Esophagus muscularis mucosa (tissue), 4 donors: ENCODE measurements at regions of chr4 and their contacts with region 1.

Region 1: GRCh38 chr4:123396307-123397143 is at the start of gene SPRY1:
- DNase-seq: peak; percentile 96
- H3K4me3 ChIP-seq: peak within 1 kb of the TSS; percentile 88 to 94 (median 92)
- H3K27ac ChIP-seq: peak within 1 kb of the TSS; percentile 92 to 95 (median 94)
- H3K4me1 ChIP-seq: peaks cover 0 to 24% (median 11%) of the 10 kb centered on the region in 4 donors
- H3K27me3 ChIP-seq: no peaks in the 10 kb centered on the region
- CTCF ChIP-seq: no peak
- EP300 ChIP-seq: no peak
- POLR2A ChIP-seq: peak; percentile 61
- total RNA-seq, gene SPRY1: 103 to 136 (median 136) TPM

Region 2: DNA sequence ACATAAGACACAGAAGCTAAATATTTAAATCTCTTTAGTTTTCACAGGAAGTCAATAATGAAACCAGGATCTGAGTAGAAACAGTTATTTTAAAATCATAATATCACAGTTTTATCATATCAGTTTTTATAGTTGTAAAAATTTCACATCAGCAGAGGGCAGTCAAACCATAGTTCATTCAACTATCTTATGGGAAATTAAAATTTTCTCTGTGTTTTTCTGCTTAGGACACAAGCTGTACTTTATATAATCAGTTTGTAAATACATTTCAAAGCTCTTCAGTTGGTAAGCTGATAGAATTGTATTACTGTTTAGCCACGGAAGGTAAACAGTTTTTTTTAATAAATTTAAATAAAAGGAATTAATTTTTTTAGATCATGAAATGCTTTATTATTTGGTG is 269.3 kb before region 1 on chr4:
- intact Hi-C with region 1: loop called (anchors 5 kb)
- DNase-seq: no peak
- H3K4me3 ChIP-seq: no peak overlapping the region
- H3K27ac ChIP-seq: no peak overlapping the region
- H3K4me1 ChIP-seq: peaks cover 0 to 16% (median 2%) of the 10 kb centered on the region in 4 donors
- H3K27me3 ChIP-seq: no peaks in the 10 kb centered on the region
- CTCF ChIP-seq: peak; percentile 29 to 43 (median 41)
- EP300 ChIP-seq: no peak
- POLR2A ChIP-seq: no peak

Region 3: GRCh38 chr4:123244137-123244536 is 152.4 kb before region 1 on chr4:
- intact Hi-C with region 1: loop called (anchors 10 kb)
- DNase-seq: no peak
- H3K4me3 ChIP-seq: no peak overlapping the region
- H3K27ac ChIP-seq: peak overlapping the region; percentile 4 to 39 (median 14)
- H3K4me1 ChIP-seq: peaks cover 38 to 54% (median 50%) of the 10 kb centered on the region in 4 donors
- H3K27me3 ChIP-seq: no peaks in the 10 kb centered on the region
- CTCF ChIP-seq: peak in 1 of 3 experiments; percentile 18
- EP300 ChIP-seq: no peak
- POLR2A ChIP-seq: no peak

Region 4: DNA sequence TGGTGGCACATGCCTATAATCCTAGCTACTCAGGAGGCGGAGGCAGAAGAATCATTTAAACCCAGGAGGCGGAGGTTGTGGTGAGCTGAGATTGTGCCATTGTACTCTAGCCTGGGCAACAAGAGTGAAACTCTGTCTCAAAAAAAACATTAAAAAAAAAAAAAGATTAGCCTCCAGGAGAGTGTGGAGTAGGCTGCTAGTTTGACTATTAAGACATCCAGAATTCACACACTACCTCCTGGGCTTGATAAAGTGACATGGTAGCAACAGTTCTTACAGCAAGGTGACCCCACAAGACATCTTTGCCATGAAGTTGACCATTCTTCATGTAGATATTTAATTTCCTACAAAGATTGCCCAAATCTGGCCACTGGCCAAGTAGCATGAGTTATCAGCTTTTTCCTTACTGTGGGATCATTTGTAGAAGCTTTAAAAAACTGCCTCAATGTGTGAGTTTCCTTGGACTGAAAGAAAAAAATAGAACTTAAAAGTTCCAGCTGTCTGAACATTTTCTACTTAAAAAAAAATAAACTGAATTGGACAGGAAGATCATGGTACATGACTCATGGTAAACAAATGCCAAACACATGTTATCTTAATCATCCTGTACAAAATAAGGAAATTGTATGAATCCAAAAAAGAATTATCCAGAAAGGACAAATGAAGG is 35.2 kb before region 1 on chr4:
- intact Hi-C with region 1: no loop called
- DNase-seq: peak; percentile 24
- H3K4me3 ChIP-seq: no peak overlapping the region
- H3K27ac ChIP-seq: peak overlapping the region; percentile 34 to 65 (median 59)
- H3K4me1 ChIP-seq: peaks cover 10 to 18% (median 14%) of the 10 kb centered on the region in 4 donors
- H3K27me3 ChIP-seq: no peaks in the 10 kb centered on the region
- CTCF ChIP-seq: no peak
- EP300 ChIP-seq: no peak
- POLR2A ChIP-seq: no peak

Region 5: GRCh38 chr4:123661080-123661737 is 264.7 kb after region 1 on chr4:
- intact Hi-C with region 1: loop called (anchors 5 kb)
- DNase-seq: no peak
- H3K4me3 ChIP-seq: no peak overlapping the region
- H3K27ac ChIP-seq: no peak overlapping the region
- H3K4me1 ChIP-seq: no peaks in the 10 kb centered on the region
- H3K27me3 ChIP-seq: no peaks in the 10 kb centered on the region
- CTCF ChIP-seq: peak; percentile 40 to 54 (median 42)
- EP300 ChIP-seq: no peak
- POLR2A ChIP-seq: no peak

Region 6: GRCh38 chr4:123785538-123785937 is 389.0 kb after region 1 on chr4:
- intact Hi-C with region 1: loop called (anchors 5 kb)
- DNase-seq: peak; percentile 93
- H3K4me3 ChIP-seq: peak overlapping the region in 2 of 4 donors; percentile 8 to 13
- H3K27ac ChIP-seq: peak overlapping the region; percentile 74 to 83 (median 78)
- H3K4me1 ChIP-seq: peaks cover 15 to 68% (median 60%) of the 10 kb centered on the region in 4 donors
- H3K27me3 ChIP-seq: no peaks in the 10 kb centered on the region
- CTCF ChIP-seq: no peak
- EP300 ChIP-seq: no peak
- POLR2A ChIP-seq: no peak

Region 7: DNA sequence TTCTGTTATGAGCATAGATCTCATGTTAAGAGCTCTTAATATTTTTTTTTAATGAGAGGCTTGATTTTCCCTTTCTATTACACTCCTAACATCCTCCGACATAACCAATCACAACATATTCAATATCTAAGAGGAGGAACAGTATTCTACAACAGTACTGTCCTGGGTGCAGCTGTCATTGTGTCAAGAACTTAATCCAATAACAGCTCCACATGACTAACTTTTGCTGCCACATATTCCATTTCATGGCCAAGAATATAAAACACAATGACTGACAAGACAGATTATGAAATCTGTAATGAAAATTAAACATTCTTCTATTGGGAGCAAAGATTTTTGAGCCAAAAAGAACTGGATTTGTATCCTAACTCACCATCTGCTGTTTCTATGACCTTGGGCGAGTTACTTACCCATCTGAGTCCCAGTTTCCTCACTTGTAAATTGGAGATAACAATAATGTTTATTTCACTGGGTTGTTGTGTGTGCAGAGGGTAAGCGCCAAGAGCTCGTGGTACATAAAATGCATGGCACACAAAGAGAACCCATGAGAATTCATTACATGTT is 405.6 kb after region 1 on chr4:
- intact Hi-C with region 1: no loop called
- DNase-seq: no peak
- H3K4me3 ChIP-seq: no peak overlapping the region
- H3K27ac ChIP-seq: no peak overlapping the region
- H3K4me1 ChIP-seq: peaks cover 0 to 23% (median 13%) of the 10 kb centered on the region in 4 donors
- H3K27me3 ChIP-seq: no peaks in the 10 kb centered on the region
- CTCF ChIP-seq: no peak
- EP300 ChIP-seq: no peak
- POLR2A ChIP-seq: no peak

Region 8: GRCh38 chr4:123832173-123833026 is 435.9 kb after region 1 on chr4:
- intact Hi-C with region 1: loop called (anchors 5 kb)
- DNase-seq: peak; percentile 95
- H3K4me3 ChIP-seq: no peak overlapping the region
- H3K27ac ChIP-seq: peak overlapping the region; percentile 69 to 85 (median 74)
- H3K4me1 ChIP-seq: peaks cover 25 to 40% (median 36%) of the 10 kb centered on the region in 4 donors
- H3K27me3 ChIP-seq: no peaks in the 10 kb centered on the region
- CTCF ChIP-seq: no peak
- EP300 ChIP-seq: peak; percentile 87
- POLR2A ChIP-seq: no peak